H1 (cell line): ENCODE measurements at regions of chr9 and their contacts with region 1.

Region 1: DNA sequence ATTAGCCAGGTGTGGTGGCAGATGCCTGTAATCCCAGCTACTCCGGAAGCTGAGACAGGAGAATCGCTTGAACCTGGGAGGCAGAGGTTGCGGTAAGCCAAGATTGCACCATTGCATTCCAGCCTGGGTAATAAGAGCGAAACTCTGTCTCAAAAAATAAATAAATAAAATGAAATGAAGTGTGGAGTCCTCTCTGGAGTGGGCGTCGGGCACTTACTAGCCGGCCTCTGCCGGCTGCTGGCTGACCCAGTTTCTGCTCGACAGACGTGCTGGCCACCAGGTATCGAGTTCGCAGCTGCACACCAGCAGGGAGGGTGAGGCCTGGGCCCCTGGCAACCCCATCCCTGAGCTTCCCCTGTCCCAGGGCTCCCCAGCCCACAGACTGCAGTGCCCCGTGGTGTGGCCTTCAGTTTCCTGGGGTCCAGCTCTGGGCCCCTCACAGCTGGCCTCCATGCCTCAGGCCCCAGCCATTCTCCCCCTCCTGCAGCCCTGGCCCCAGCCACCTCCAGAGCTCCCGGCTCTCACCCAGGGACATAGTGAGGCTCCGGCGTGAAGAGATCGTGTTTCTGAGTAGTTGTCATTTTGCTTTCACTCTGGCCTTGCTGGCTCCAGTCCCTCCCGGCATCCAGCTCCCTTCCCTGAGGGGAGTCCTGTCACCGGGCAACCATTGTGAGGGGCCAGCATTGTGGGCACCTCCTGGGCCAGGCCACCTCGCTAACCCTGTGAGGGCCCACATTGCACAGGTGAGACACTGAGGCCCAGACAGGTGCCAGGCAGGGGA is 3.8 kb upstream of the STPG3 start:
- DNase-seq: no peak
- H3K4me3 ChIP-seq: no peak overlapping the region
- H3K27ac ChIP-seq: no peak overlapping the region
- H3K4me1 ChIP-seq: peaks cover 0 to 20% (median 16%) of the 10 kb centered on the region in 4 experiments; a peak in 5 of 7 replicates
- H3K27me3 ChIP-seq: no peaks in the 10 kb centered on the region; a peak in 2 of 7 replicates
- CTCF ChIP-seq: no peak
- EP300 ChIP-seq: no peak
- POLR2A ChIP-seq: no peak
- RAD21 ChIP-seq: no peak

Region 2: GRCh38 chr9:137086531-137087408 is 160.6 kb before region 1 on chr9 and contains the start of gene MAN1B1:
- CTCF ChIA-PET with region 1: no interaction called
- POLR2A ChIA-PET with region 1: no interaction called
- DNase-seq: peak; percentile 97 to 99
- H3K4me3 ChIP-seq: peak within 1 kb of the TSS; percentile 55 to 81 (median 71)
- H3K27ac ChIP-seq: no peak within 1 kb of the TSS
- H3K4me1 ChIP-seq: peaks cover 0 to 10% (median 4%) of the 10 kb centered on the region in 4 experiments; a peak in 4 of 7 replicates
- H3K27me3 ChIP-seq: peaks cover 0 to 11% (median 3%) of the 10 kb centered on the region in 4 experiments; a peak in 5 of 7 replicates
- CTCF ChIP-seq: peak in 1 of 3 experiments; percentile 6; a peak in 1 of 4 replicates
- EP300 ChIP-seq: no peak
- POLR2A ChIP-seq: peak in 1 of 2 experiments; percentile 73; a peak in 1 of 3 replicates
- RAD21 ChIP-seq: no peak
- total RNA-seq, gene MAN1B1: 35.1 and 36.3 TPM in 2 replicates

Region 3: DNA sequence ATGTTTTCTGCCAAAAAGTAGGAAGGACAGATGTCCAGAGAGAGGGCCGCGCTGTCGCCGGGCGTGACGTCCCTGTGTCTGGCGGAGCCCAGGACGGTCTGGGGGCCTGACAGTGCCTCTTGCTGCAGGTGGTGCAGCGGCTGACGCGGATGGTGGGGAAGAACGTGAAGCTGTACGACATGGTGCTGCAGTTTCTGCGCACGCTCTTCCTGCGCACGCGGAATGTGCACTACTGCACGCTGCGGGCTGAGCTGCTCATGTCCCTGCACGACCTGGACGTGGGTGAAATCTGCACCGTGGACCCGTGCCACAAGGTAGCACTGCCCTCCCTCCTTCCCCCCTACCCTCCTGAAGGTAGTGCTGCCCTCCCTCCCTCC is 15.6 kb after region 1 on chr9:
- CTCF ChIA-PET with region 1: interaction called, 13 read pairs
- POLR2A ChIA-PET with region 1: interaction called, 1,462 read pairs
- DNase-seq: no peak
- H3K4me3 ChIP-seq: no peak overlapping the region
- H3K27ac ChIP-seq: no peak overlapping the region
- H3K4me1 ChIP-seq: no peaks in the 10 kb centered on the region
- H3K27me3 ChIP-seq: no peaks in the 10 kb centered on the region
- CTCF ChIP-seq: no peak
- EP300 ChIP-seq: no peak
- POLR2A ChIP-seq: no peak
- RAD21 ChIP-seq: no peak

Region 4: GRCh38 chr9:137521405-137521985 is 274.2 kb after region 1 on chr9:
- CTCF ChIA-PET with region 1: no interaction called
- POLR2A ChIA-PET with region 1: no interaction called
- DNase-seq: no peak
- H3K4me3 ChIP-seq: no peak overlapping the region
- H3K27ac ChIP-seq: no peak overlapping the region
- H3K4me1 ChIP-seq: no peaks in the 10 kb centered on the region
- H3K27me3 ChIP-seq: no peaks in the 10 kb centered on the region
- CTCF ChIP-seq: no peak
- EP300 ChIP-seq: no peak
- POLR2A ChIP-seq: no peak
- RAD21 ChIP-seq: no peak